CD4-positive, alpha-beta memory T cell (primary cell): ENCODE measurements at regions of chr3 and their contacts with region 1.

Region 1: DNA sequence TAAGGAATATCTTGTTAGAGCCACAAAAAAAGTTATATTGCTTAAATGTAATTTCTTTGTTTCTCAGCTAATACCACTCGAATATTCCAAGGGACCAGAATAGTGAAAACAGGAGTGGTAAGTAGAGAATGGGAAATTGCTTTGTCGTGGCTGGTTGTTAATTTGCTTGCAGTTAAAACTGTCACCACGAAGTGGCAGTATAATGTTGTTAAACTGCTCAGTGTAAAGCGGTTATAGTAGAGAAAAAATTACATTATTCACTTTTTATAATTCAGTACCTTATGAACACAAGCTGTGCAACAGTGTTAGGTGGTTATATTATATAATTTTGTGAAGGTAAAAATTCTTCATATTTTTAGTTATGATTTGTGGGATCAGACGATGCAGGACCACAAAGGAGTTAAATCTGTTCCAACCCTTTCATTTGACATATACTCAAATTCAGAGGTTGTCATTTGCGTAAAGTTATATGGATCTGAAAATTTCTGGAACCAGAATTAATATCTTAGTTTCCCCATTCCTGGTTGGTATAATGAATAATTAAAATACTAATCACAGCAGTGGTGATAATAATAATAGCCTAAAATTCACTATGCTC is 171.8 kb downstream of the FEZF2 start:
- DNase-seq: no peak
- H3K4me3 ChIP-seq: no peak overlapping the region
- H3K4me3 Mint-ChIP-seq: no peak overlapping the region
- H3K27ac ChIP-seq: no peak overlapping the region
- H3K27ac Mint-ChIP-seq: no peak overlapping the region
- H3K4me1 ChIP-seq: no peaks in the 10 kb centered on the region
- H3K4me1 Mint-ChIP-seq: no peaks in the 10 kb centered on the region
- H3K27me3 ChIP-seq: no peaks in the 10 kb centered on the region
- H3K27me3 Mint-ChIP-seq: peaks cover 0 to 2% of the 10 kb centered on the region in 2 donors

Region 2: GRCh38 chr3:61927332-61927731 is 274.2 kb before region 1 on chr3:
- CTCF ChIA-PET with region 1: no interaction called
- POLR2A ChIA-PET with region 1: no interaction called
- intact Hi-C with region 1: no loop called
- DNase-seq: no peak
- H3K4me3 ChIP-seq: no peak overlapping the region
- H3K4me3 Mint-ChIP-seq: no peak overlapping the region
- H3K27ac ChIP-seq: no peak overlapping the region
- H3K27ac Mint-ChIP-seq: peak overlapping the region in 1 of 7 donors; percentile 8
- H3K4me1 ChIP-seq: no peaks in the 10 kb centered on the region
- H3K4me1 Mint-ChIP-seq: no peaks in the 10 kb centered on the region
- H3K27me3 ChIP-seq: no peaks in the 10 kb centered on the region
- H3K27me3 Mint-ChIP-seq: no peaks in the 10 kb centered on the region

Region 3: GRCh38 chr3:62188681-62189383 is 12.7 kb before region 1 on chr3:
- CTCF ChIA-PET with region 1: interaction called, 50 read pairs
- POLR2A ChIA-PET with region 1: no interaction called
- intact Hi-C with region 1: no loop called
- DNase-seq: peak in 4 of 5 donors; percentile 41 to 49 (median 44)
- H3K4me3 ChIP-seq: no peak overlapping the region
- H3K4me3 Mint-ChIP-seq: peak overlapping the region in 6 of 8 donors; percentile 22 to 70 (median 58)
- H3K27ac ChIP-seq: no peak overlapping the region
- H3K27ac Mint-ChIP-seq: peak overlapping the region in 3 of 7 donors; percentile 14 to 32 (median 18)
- H3K4me1 ChIP-seq: peaks cover 4% of the 10 kb centered on the region
- H3K4me1 Mint-ChIP-seq: peaks cover 5 to 8% (median 6%) of the 10 kb centered on the region in 4 donors
- H3K27me3 ChIP-seq: no peaks in the 10 kb centered on the region
- H3K27me3 Mint-ChIP-seq: peaks cover 0 to 3% of the 10 kb centered on the region in 2 donors